ENCODE measurements at regions of chr16 and their contacts with region 1.

Region 1: GRCh38 chr16:50266337-50267091 is at the start of gene ADCY7:
- DNase-seq: peak; percentile 91
- ATAC-seq: peak; percentile 79
- H3K4me3 Mint-ChIP-seq: peak within 1 kb of the TSS; percentile 84
- H3K27ac Mint-ChIP-seq: peak within 1 kb of the TSS; percentile 95
- H3K4me1 Mint-ChIP-seq: peaks cover 70% of the 10 kb centered on the region
- H3K27me3 Mint-ChIP-seq: no peaks in the 10 kb centered on the region
- CTCF ChIP-seq: no peak
- total RNA-seq, gene ADCY7: 89.9 to 92.1 TPM

Region 2: DNA sequence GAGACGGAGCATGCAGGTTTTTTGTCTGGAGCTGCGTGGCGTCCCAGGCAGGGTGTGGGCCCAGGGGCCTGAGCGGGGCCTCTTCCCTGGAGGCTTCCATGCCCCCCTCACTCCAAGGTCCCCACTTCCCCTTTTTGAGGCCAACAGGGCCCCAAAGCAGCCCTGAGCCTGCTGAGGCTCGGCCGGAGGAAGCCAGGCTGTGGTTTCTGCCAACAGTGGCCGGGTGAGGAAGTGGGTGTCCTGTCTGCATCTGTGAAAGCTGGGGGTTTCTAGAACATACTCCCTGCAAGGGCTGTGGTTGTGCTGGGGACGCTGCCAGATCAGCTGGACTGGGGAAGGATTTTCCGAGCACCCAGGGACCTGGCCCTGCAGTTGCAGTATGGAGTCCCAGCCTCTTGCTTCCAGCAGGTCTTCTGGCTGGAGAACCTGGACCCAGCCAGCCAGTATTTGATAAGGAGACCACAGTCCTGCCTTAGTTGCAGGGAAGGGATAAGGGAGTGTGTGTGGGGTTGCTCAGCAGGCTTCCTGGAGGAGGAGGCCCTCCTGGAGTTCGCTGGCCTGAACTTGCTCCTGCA is 15.5 kb after region 1 on chr16:
- CTCF ChIA-PET with region 1: interaction called, 8 read pairs
- POLR2A ChIA-PET with region 1: interaction called, 215 read pairs
- intact Hi-C with region 1: no loop called
- DNase-seq: peak; percentile 82
- ATAC-seq: peak; percentile 70
- H3K4me3 Mint-ChIP-seq: peak overlapping the region; percentile 29
- H3K27ac Mint-ChIP-seq: peak overlapping the region; percentile 70
- H3K4me1 Mint-ChIP-seq: peaks cover 87% of the 10 kb centered on the region
- H3K27me3 Mint-ChIP-seq: no peaks in the 10 kb centered on the region
- CTCF ChIP-seq: no peak

Region 3: DNA sequence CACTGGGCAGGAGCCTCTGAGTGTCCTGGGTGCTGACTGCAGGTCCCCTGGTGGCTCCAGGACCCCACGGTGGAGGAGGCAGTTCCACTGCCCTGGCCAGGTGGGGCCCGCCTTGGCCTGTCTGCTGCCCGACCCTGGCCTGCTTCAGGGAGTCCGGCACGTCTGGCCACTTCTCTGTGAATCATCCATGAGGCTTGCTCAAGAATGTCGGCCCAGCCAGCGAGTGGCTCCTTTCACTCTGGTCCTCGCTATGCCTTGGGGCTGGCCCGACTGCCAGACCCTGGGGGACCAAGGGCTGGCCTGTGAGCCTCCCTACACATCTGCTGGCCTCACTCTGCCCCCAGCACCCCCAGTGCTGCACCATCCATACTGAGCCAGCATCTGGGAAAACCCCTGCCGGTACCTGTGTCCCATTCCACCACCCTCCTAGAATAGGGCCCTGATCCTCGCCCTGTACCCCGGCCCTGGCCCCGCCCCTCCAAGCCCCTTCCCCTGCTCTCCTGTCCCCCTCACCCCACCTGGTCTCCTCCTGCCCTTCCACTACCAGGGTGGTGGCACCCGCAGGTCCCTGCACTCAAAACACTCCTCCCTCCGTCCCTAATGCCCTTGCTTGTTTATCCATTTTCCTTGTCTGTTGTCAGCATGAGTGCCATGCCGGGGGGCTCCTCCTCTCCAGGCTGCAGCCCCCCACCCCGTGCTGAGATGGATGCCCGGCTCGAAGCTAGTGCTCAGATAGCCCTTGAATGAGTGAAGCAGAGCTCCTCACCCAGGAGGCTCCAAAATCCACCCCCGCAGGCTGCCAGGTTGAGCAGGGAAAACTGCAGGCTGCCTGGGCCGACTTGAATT is 35.3 kb after region 1 on chr16:
- CTCF ChIA-PET with region 1: no interaction called
- POLR2A ChIA-PET with region 1: no interaction called
- intact Hi-C with region 1: no loop called
- DNase-seq: no peak
- ATAC-seq: no peak
- H3K4me3 Mint-ChIP-seq: no peak overlapping the region
- H3K27ac Mint-ChIP-seq: no peak overlapping the region
- H3K4me1 Mint-ChIP-seq: no peaks in the 10 kb centered on the region
- H3K27me3 Mint-ChIP-seq: no peaks in the 10 kb centered on the region
- CTCF ChIP-seq: no peak